ENCODE measurements at regions of chr13 and their contacts with region 1.

Region 1: GRCh38 chr13:95403828-95404522 is 102.7 kb upstream of the ABCC4 start:
- DNase-seq: peak; percentile 74 to 92
- H3K4me3 ChIP-seq: peak overlapping the region; percentile 47 to 74 (median 68)
- H3K27ac ChIP-seq: no peak overlapping the region
- H3K4me1 ChIP-seq: peaks cover 2 to 3% (median 3%) of the 10 kb centered on the region in 4 experiments; a peak in 3 of 7 replicates
- H3K27me3 ChIP-seq: 0 out of 7 replicates have a peak, but pooled peaks cover 0 to 2% (median 0%) of the 10 kb centered on the region in 4 experiments
- CTCF ChIP-seq: peak; percentile 85 to 94 (median 91)
- EP300 ChIP-seq: no peak
- POLR2A ChIP-seq: peak in 1 of 2 experiments; percentile 55; a peak in 2 of 3 replicates
- RAD21 ChIP-seq: peak; percentile 99 to 100

Region 2: GRCh38 chr13:95275322-95276036 is 128.5 kb before region 1 on chr13:
- CTCF ChIA-PET with region 1: interaction called, 10 read pairs
- POLR2A ChIA-PET with region 1: no interaction called
- DNase-seq: no peak
- H3K4me3 ChIP-seq: no peak overlapping the region
- H3K27ac ChIP-seq: no peak overlapping the region
- H3K4me1 ChIP-seq: no peaks in the 10 kb centered on the region; a peak in 2 of 7 replicates
- H3K27me3 ChIP-seq: no peaks in the 10 kb centered on the region
- CTCF ChIP-seq: no peak
- EP300 ChIP-seq: no peak
- POLR2A ChIP-seq: no peak
- RAD21 ChIP-seq: no peak

Region 3: DNA sequence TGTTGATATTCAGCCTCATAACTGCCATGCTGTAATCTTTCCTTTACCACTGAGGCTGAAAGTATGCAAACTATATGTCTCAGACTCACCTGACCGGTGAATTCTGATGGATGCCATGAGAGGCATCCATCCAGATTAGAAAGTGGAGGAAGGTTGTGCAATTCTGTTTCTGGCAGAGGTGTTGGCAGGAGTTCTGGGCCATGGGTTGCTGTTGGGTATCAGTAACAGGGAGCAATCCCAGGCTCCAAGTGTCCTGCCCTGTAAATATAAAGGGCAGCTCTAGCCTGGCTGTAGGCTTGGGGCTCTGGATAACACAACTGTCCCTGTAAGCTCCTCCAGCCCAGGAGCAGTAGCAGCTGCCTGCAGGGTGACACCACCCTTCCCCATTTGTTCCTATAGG is 25.4 kb before region 1 on chr13:
- CTCF ChIA-PET with region 1: interaction called, 15 read pairs
- POLR2A ChIA-PET with region 1: interaction called, 3 read pairs
- DNase-seq: no peak
- H3K4me3 ChIP-seq: no peak overlapping the region
- H3K27ac ChIP-seq: no peak overlapping the region
- H3K4me1 ChIP-seq: peaks cover 0 to 6% (median 0%) of the 10 kb centered on the region in 4 experiments; a peak in 1 of 7 replicates
- H3K27me3 ChIP-seq: no peaks in the 10 kb centered on the region
- CTCF ChIP-seq: no peak
- EP300 ChIP-seq: no peak
- POLR2A ChIP-seq: no peak
- RAD21 ChIP-seq: no peak

Region 4: GRCh38 chr13:95447814-95448213 is 43.8 kb after region 1 on chr13:
- CTCF ChIA-PET with region 1: interaction called, 19 read pairs
- POLR2A ChIA-PET with region 1: no interaction called
- DNase-seq: no peak
- H3K4me3 ChIP-seq: no peak overlapping the region
- H3K27ac ChIP-seq: no peak overlapping the region
- H3K4me1 ChIP-seq: peaks cover 4 to 10% (median 6%) of the 10 kb centered on the region in 4 experiments; a peak in 6 of 7 replicates
- H3K27me3 ChIP-seq: no peaks in the 10 kb centered on the region
- CTCF ChIP-seq: no peak
- EP300 ChIP-seq: no peak
- POLR2A ChIP-seq: no peak
- RAD21 ChIP-seq: no peak

Region 5: DNA sequence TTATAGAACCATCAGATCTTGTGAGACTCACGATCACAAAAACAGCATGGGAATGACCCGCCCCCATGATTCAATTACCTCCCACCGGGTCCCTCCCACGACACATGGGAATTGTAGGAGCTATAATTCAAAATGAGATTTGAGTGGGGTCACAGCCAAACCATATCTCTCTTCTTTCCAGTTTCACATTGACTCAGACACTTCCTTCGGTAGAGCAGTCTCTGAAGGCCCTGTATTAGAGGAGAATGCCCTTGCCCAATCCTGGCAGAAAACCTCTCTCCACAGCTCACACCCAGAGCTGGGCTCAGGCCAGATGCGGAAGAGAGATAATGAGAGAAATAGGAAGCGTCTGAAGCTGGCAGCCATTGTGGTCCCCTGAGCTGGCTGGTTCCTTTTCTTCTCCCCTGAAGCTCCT is 76.2 kb after region 1 on chr13:
- CTCF ChIA-PET with region 1: interaction called, 39 read pairs
- POLR2A ChIA-PET with region 1: no interaction called
- DNase-seq: no peak
- H3K4me3 ChIP-seq: no peak overlapping the region
- H3K27ac ChIP-seq: no peak overlapping the region
- H3K4me1 ChIP-seq: no peaks in the 10 kb centered on the region; a peak in 1 of 7 replicates
- H3K27me3 ChIP-seq: peaks cover 0 to 2% (median 0%) of the 10 kb centered on the region in 4 experiments; a peak in 3 of 7 replicates
- CTCF ChIP-seq: no peak
- EP300 ChIP-seq: no peak
- POLR2A ChIP-seq: no peak
- RAD21 ChIP-seq: no peak

Measured in H1 (cell line).